ENCODE measurements at regions of chr10 and their contacts with region 1.

Region 1: GRCh38 chr10:8325024-8325980 is 270.8 kb downstream of the GATA3 start:
- DNase-seq: no peak

Region 2: GRCh38 chr10:7853890-7854289 is 471.4 kb before region 1 on chr10:
- intact Hi-C with region 1: loop called in 1 of 2 experiments (anchors 5 kb)
- DNase-seq: no peak

Region 3: DNA sequence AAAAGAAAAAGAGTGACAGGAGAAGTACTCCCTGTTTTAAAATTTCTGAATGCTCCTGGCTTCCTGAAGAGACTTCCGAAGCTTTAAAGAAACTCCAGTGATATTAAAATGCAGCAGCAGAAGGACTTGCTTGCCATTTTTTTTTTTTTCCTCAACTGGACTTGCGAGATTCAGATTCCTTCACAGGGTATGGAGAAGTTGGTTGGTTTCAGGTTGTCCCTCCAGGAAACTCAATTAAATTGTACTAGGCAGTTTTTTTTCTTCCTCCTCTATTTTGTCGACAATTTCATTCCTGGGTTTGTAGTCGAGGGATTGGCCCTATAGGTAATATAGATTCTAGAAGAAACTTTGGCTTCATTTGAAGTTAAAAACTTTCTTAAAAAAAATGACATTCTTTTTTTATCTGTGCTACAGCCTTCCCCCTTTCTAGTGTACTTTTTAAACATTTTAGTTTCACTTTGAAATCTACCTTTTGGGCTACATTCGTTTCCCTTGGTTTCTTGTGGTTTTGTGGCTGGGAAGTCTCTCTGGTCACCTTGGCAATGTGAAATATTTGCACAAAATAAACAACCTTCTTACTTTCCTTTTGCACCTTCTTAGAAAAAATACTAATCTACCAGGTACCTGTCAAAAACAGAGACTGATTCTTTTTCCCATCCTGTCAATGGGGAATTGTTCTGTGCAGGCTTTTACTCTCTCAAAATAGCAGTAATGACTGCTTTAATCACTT is 79.3 kb after region 1 on chr10:
- intact Hi-C with region 1: no loop called
- DNase-seq: no peak

Region 4: DNA sequence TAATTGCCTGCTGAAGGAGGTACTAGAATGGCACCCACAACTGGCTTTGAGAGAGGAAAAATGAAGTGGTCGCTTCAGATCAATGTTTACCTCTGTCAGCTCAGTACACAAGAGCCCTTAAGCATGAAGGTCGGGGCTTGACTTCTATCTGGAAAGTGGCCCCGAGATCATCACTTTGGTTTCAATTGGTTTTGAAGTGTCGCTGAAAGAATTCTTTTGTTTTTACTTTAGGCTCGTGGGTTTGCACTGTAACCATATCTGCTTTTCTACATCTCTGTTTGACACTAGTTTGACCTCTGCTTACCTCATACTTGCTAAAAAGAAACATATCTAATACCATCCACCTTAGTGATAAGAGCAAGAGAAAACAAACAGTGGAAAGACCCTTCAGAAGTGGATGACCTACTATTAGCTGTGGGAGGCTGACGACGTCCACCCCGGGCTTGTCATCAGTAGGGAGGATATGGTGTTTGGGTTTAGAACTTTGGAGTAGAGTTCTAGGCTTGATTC is 90.9 kb after region 1 on chr10:
- intact Hi-C with region 1: no loop called
- DNase-seq: no peak

Measured in posterior vena cava (tissue), 2 donors.